Dorsolateral prefrontal cortex (tissue), 120 donors: ENCODE measurements at regions of chr6 and their contacts with region 1.

Region 1: DNA sequence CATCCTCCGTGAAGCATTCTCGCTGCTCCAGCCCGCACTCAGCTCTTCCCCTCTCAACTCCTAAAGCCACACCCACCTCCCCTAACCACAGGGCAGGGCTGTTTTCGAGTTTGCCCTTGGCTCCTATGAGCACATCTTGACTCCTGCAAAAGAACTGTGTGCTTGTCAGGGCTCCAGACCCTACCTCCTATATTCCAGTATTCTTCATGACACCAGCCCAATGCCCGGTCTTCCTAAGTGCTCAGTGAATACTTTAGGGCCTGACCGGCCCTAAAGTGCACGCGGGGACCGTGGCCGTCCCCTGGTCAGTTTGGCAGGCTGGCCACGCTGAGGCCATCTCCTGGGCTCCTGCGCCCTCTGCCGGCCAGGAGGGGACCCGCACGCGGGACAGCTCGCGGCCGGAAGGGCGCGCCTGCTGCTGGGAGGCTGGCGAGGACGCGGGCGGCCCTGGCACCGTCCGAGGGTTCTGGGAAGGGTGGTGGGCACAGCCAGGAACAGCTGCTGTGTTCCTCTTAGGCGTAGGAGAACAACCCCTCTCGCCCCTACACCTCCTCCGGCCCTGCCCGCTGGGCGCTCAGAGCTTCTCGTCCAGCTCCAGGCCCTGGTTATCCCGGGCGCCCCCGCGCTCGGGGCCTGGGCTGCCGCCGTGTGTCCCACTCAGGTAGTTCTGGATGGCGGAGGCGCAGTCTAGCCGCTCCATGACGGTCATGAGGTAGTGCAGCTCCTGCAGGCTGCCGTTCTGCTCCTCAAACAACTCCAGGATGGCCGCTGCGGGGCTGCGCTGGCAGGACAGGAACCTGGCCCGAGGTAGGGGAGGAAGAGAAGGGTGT is 11.0 kb downstream of the UNC5CL start:
- DNase-seq: peak; percentile 52 to 88 (median 74)
- H3K4me3 ChIP-seq: peak overlapping the region; percentile 11 to 69 (median 51)
- H3K27ac ChIP-seq: peak overlapping the region in 25 of 59 donors; percentile 4 to 80 (median 49)
- H3K27me3 ChIP-seq: no peaks in the 10 kb centered on the region
- CTCF ChIP-seq: peak; percentile 85 to 100 (median 98)

Region 2: GRCh38 chr6:39347906-39348585 is 1680.0 kb before region 1 on chr6:
- intact Hi-C with region 1: loop called in 1 of 2 experiments (anchors 5 kb)
- DNase-seq: peak; percentile 49 to 87 (median 79)
- H3K4me3 ChIP-seq: no peak overlapping the region
- H3K27ac ChIP-seq: peak overlapping the region in 1 of 59 donors; percentile 9
- H3K27me3 ChIP-seq: no peaks in the 10 kb centered on the region
- CTCF ChIP-seq: peak; percentile 54 to 96 (median 89)

Region 3: DNA sequence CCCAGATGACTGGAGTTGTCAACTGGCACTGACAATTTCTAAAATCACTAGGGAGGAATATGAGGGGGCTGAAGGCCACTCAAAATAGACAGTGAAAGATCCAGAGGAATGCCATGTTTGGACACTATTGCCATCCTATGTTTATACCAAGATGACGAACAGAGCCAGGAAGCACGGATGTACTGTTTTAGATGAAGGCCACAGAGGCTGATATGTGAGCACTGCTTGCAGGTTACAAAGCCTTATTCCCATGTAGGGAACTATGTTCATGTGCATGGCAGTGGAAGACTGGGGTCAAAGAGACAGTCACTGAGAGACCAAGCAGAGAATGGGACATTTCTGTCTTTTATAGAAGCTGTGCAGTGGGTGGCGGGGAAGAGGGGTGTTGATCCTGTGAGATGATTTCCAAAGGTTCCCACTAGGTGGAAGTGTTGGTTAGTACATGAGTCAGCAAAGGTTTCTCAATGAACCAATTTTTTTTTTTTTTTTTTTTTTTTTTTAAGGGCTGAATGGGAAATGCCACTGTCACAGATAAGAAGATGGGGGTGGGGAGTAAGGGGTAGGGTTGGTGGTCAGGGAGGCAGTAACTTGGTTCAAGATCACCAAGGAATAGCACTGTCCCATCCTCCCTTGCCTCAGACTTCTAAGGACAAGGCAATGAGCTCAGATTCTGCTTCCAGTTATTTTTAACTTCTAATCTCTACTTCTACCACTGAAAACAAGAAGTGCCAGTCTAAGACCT is 1047.0 kb before region 1 on chr6:
- intact Hi-C with region 1: loop called in 1 of 2 experiments (anchors 5 kb)
- DNase-seq: peak in 3 of 10 donors; percentile 15 to 44 (median 38)
- H3K4me3 ChIP-seq: no peak overlapping the region
- H3K27ac ChIP-seq: peak overlapping the region in 25 of 59 donors; percentile 1 to 66 (median 45)
- H3K27me3 ChIP-seq: no peaks in the 10 kb centered on the region
- CTCF ChIP-seq: peak in 54 of 56 donors; percentile 38 to 79 (median 56)

Region 4: GRCh38 chr6:40599555-40599954 is 428.5 kb before region 1 on chr6:
- intact Hi-C with region 1: loop called in 1 of 2 experiments (anchors 10 kb)
- DNase-seq: no peak
- H3K4me3 ChIP-seq: no peak overlapping the region
- H3K27ac ChIP-seq: no peak overlapping the region
- H3K27me3 ChIP-seq: peaks cover 0 to 38% (median 0%) of the 10 kb centered on the region in 45 donors
- CTCF ChIP-seq: no peak

Region 5: DNA sequence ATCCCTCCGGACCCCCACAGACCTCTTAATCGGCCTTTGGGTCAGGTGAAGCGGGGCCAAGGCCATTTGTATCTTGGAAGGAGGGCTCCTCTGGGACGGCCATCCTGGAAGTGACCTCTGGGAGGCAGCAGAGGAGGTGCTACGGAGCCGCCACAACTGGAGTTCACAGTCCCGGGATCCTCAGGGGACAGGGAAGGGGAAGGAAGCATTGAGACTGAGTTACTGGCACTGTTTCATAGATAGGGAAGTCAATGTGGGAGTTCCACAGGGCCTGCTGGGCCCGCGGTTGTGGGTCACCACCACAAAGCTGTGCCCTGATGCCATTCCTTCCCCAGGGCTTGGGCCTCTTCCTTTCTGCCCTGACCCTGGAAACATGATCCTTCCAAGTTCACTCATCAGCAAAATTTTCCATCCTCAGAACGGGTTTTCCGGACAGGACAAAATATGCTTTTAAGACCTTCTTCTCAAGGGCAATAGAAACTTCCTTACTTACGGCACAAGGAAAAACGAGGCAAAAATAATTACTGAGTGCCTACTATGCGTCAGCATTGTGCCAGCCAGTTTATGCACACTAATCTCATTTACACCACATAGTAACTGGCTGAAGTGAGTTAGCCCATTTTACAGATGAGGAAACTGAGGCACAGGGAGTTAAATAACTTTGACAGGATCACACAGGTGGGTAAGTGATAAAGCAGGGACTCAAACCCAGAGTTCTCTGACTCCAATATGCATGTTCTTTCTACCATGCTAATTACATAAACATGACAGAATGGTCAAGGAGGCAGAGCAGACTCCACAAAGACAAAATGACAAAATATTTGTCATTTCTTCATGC is 132.8 kb before region 1 on chr6:
- intact Hi-C with region 1: loop called in 1 of 2 experiments (anchors 5 kb)
- DNase-seq: peak in 5 of 10 donors; percentile 16 to 61 (median 51)
- H3K4me3 ChIP-seq: no peak overlapping the region
- H3K27ac ChIP-seq: peak overlapping the region in 2 of 59 donors; percentile 7 to 10
- H3K27me3 ChIP-seq: no peaks in the 10 kb centered on the region
- CTCF ChIP-seq: peak in 52 of 56 donors; percentile 26 to 78 (median 57)

Region 6: GRCh38 chr6:40912158-40912946 is 115.7 kb before region 1 on chr6:
- intact Hi-C with region 1: loop called in 1 of 2 experiments (anchors 5 kb)
- DNase-seq: peak in 9 of 10 donors; percentile 15 to 70 (median 61)
- H3K4me3 ChIP-seq: no peak overlapping the region
- H3K27ac ChIP-seq: no peak overlapping the region
- H3K27me3 ChIP-seq: no peaks in the 10 kb centered on the region
- CTCF ChIP-seq: peak in 55 of 56 donors; percentile 24 to 72 (median 55)